ENCODE measurements at regions of chr2 and their contacts with region 1.

Region 1: DNA sequence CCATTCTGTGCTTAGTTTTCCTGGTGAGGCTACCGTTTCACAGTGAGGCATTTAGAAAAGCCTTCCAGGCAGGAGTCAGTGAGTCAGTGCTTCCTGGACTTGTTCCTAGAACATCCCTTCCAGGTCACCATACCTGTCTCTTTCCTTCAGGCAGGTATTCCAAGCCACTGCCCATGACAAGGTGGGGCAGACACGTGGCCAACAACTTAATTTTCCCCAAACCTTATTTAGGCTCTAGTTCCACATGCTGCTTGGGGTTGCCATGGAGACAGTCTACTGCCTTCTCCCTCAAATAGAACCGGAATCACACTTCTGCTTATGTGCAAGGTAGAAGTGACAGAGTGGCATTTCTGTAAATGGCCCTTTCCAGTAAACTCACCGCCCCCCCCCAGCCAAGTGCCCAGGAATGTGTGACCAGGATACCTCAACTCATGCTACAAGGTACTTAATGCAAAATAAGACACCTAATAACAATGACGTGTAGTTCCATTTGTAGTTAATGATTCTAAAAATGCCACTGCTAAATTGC is 258.3 kb downstream of the PRKCE start:
- DNase-seq: no peak
- H3K4me3 ChIP-seq: no peak overlapping the region
- H3K27ac ChIP-seq: no peak overlapping the region
- H3K4me1 ChIP-seq: no peaks in the 10 kb centered on the region
- H3K27me3 ChIP-seq: no peaks in the 10 kb centered on the region
- CTCF ChIP-seq: no peak

Region 2: DNA sequence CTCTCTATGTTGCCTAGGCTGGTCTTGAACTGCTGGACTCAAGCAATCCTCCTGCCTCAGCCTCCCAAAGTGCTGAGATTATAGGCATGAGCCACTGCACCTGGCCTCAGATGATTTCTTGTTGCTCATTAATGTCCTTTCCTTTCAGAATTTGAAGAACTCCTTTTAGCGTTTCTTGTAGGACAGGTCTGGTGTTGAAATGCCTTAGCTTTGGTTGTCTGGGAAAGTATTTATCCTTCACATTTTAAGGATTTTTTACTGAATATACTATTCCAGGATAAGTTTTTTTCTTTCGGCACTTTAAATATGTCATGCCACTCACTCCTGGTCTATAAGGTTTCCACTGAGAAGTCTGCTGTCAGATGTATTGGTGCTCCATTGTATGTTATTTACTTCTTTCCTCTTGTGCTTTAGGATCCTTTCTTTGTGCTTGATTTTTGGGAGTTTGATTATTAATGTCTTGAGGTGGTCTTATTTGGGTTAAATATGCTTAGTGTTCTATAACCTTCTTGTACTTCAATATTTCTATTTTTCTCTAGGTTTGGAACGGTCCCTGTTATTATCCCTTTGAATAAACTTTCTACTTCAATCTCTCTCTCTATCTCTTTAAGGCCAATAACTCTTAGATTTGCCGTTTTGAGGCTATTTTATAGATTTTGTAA is 1216.9 kb after region 1 on chr2:
- CTCF ChIA-PET with region 1: no interaction called
- POLR2A ChIA-PET with region 1: interaction called, 11 read pairs
- intact Hi-C with region 1: no loop called
- DNase-seq: no peak
- H3K4me3 ChIP-seq: no peak overlapping the region
- H3K27ac ChIP-seq: no peak overlapping the region
- H3K4me1 ChIP-seq: no peaks in the 10 kb centered on the region
- H3K27me3 ChIP-seq: no peaks in the 10 kb centered on the region
- CTCF ChIP-seq: no peak

Measured in A673 (cell line).